CD14-positive monocyte (primary cell): ENCODE measurements at regions of chr16 and their contacts with region 1.

Region 1: DNA sequence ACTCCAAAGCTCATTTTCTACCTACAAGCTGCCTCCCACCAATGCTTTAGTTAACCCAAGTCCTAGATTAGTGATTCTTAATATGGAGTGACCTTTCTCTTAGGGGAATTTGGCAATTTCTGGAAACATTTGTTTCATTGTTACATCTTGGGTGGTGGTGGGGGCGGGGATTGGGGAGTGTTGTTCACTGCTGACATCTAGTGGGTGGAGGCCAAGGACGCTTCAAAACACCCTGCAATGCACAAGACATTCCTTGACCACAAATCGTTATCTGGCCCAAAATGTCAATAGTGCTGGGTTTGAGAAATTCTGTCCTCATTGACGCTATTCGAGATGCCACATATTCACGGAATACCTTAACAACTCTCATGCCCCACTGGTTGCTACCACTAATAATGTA is 282.9 kb downstream of the RBFOX1 start:
- DNase-seq: no peak
- H3K4me3 ChIP-seq: no peak overlapping the region
- H3K4me3 Mint-ChIP-seq: no peak overlapping the region
- H3K27ac ChIP-seq: no peak overlapping the region
- H3K27ac Mint-ChIP-seq: no peak overlapping the region
- H3K4me1 ChIP-seq: no peaks in the 10 kb centered on the region
- H3K4me1 Mint-ChIP-seq: no peaks in the 10 kb centered on the region
- H3K27me3 ChIP-seq: no peaks in the 10 kb centered on the region
- H3K27me3 Mint-ChIP-seq: peaks cover 0 to 2% (median 0%) of the 10 kb centered on the region in 3 donors
- CTCF ChIP-seq: no peak

Region 2: DNA sequence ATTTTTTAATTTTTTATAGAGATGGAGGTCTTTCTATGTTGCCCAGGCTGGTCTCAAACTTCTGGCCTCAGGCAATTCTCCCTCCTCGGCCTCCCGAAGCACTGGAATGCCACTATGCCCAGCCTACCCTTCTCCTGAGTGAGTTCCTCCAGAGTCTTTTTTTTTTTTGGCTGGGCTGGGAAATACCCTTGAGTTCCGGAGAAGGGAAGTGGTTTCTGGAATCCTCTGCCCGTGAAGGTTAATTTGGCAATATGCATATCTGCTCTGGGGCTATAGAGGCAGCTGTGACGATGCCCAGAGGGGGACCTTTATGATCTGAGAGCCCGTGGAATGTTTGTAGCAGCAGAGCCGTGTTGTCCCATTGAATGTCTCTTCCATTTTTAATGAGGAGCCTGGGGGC is 65.5 kb before region 1 on chr16:
- intact Hi-C with region 1: loop called in 1 of 2 experiments (anchors 10 kb)
- DNase-seq: no peak
- H3K4me3 ChIP-seq: no peak overlapping the region
- H3K4me3 Mint-ChIP-seq: no peak overlapping the region
- H3K27ac ChIP-seq: no peak overlapping the region
- H3K27ac Mint-ChIP-seq: no peak overlapping the region
- H3K4me1 ChIP-seq: no peaks in the 10 kb centered on the region
- H3K4me1 Mint-ChIP-seq: no peaks in the 10 kb centered on the region
- H3K27me3 ChIP-seq: no peaks in the 10 kb centered on the region
- H3K27me3 Mint-ChIP-seq: peaks cover 0 to 2% (median 1%) of the 10 kb centered on the region in 3 donors
- CTCF ChIP-seq: no peak